ENCODE measurements at regions of chr1 and their contacts with region 1.

Region 1: GRCh38 chr1:151909150-151910149 is at the start of gene THEM4:
- DNase-seq: peak; percentile 86 to 99
- H3K4me3 ChIP-seq: peak within 1 kb of the TSS; percentile 64 to 71
- H3K27ac ChIP-seq: peak within 1 kb of the TSS; percentile 81 to 87
- H3K4me1 ChIP-seq: peaks cover 4 to 7% of the 10 kb centered on the region in 2 donors
- H3K27me3 ChIP-seq: no peaks in the 10 kb centered on the region
- CTCF ChIP-seq: peak in 2 of 3 experiments; percentile 23 to 30
- total RNA-seq, gene THEM4: 7.7 TPM

Region 2: GRCh38 chr1:152036267-152037216 is 127.1 kb after region 1 on chr1 and contains the start of gene S100A11:
- intact Hi-C with region 1: loop called (anchors 1 kb)
- DNase-seq: peak; percentile 77 to 95
- H3K4me3 ChIP-seq: peak within 1 kb of the TSS; percentile 79 to 83
- H3K27ac ChIP-seq: peak within 1 kb of the TSS; percentile 89 to 98
- H3K4me1 ChIP-seq: peaks cover 6 to 19% of the 10 kb centered on the region in 2 donors
- H3K27me3 ChIP-seq: no peaks in the 10 kb centered on the region
- CTCF ChIP-seq: no peak
- total RNA-seq, gene S100A11: 442 TPM